ENCODE measurements at regions of chr20 and their contacts with region 1.

Region 1: DNA sequence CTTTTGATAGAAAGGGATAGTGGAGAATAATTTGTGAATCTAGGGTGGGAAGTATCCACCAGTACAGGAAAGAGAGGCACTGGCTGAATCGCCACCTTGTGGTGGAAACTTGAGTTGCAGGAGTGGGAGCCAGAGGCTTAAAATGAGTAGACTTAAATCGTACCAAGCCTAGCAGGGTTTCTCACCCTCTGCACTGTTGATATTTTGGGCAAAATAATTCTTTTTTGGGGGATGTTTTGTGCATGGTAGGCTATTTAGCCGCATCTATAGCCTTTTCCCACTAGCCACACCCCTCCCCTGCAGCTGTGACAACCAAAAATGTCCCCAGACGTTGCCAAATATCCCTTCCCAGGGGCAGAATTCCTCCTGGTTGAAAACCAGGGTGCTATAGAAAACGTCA is 119.1 kb downstream of the DHX35 start:
- DNase-seq: peak; percentile 62 to 94
- H3K4me3 ChIP-seq: no peak overlapping the region
- H3K27ac ChIP-seq: no peak overlapping the region
- H3K4me1 ChIP-seq: no peaks in the 10 kb centered on the region
- H3K27me3 ChIP-seq: no peaks in the 10 kb centered on the region; a peak in 1 of 7 replicates
- CTCF ChIP-seq: peak; percentile 75 to 92 (median 80)
- EP300 ChIP-seq: no peak
- POLR2A ChIP-seq: no peak
- RAD21 ChIP-seq: peak; percentile 63 to 69

Region 2: GRCh38 chr20:39021748-39022147 is 59.5 kb before region 1 on chr20:
- CTCF ChIA-PET with region 1: no interaction called
- POLR2A ChIA-PET with region 1: no interaction called
- DNase-seq: no peak
- H3K4me3 ChIP-seq: no peak overlapping the region
- H3K27ac ChIP-seq: no peak overlapping the region
- H3K4me1 ChIP-seq: no peaks in the 10 kb centered on the region
- H3K27me3 ChIP-seq: no peaks in the 10 kb centered on the region
- CTCF ChIP-seq: no peak
- EP300 ChIP-seq: no peak
- POLR2A ChIP-seq: no peak
- RAD21 ChIP-seq: no peak

Region 3: DNA sequence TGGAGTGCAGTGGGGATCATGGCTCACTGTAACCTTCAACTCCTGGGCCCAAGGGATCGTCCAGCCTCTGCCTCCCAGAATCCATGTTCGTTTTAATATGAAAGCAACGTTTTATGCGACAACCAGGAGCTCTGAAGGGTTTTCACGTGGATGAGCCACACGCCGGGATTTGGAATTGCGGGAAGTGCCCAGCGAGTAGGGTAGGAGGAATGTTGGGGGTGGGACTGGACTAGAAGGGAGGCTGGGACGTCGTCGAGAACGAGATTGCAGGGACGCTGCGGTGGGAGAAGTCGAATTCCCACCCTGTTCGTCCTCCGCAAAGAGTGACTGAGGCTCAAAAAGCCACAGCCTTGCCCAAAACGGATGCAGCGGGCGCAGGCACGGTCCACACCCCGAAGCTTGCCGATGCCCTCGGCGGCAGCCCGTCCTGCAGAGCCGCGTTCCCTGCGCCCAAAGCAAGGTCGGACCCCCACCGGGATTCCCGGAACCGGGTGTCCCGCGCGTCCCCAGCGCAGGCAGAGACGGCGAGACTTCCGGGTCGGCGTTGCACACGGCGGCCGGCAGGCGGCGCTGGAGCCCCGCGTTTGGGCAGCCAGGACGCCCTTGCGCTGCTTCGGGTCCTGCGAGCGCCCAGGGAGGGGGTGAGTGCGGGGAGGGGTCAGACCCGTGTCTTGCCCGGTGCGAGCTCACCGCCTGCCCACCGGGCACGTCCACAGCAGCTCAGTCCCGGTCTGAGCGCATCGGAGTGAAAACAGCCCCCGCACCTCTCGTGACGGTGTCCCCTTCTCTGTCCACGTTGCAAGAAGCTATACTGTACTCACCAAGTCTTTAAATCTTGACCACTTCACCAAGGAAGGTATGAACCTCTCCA is 31.3 kb before region 1 on chr20:
- CTCF ChIA-PET with region 1: interaction called, 127 read pairs
- POLR2A ChIA-PET with region 1: interaction called, 3 read pairs
- DNase-seq: peak; percentile 59 to 96
- H3K4me3 ChIP-seq: peak overlapping the region; percentile 47 to 76 (median 64)
- H3K27ac ChIP-seq: no peak overlapping the region
- H3K4me1 ChIP-seq: peaks cover 0 to 6% (median under 1%) of the 10 kb centered on the region in 4 experiments; a peak in 3 of 7 replicates
- H3K27me3 ChIP-seq: peaks cover 0 to 10% (median 6%) of the 10 kb centered on the region in 4 experiments; a peak in 4 of 7 replicates
- CTCF ChIP-seq: peak; percentile 89 to 98 (median 94)
- EP300 ChIP-seq: no peak
- POLR2A ChIP-seq: 0 out of 3 replicates have a peak, but pooled peaks of 1 of the 2 experiments have one; percentile 41
- RAD21 ChIP-seq: peak; percentile 94 to 98

Region 4: GRCh38 chr20:39057911-39058310 is 23.3 kb before region 1 on chr20:
- CTCF ChIA-PET with region 1: interaction called, 197 read pairs
- POLR2A ChIA-PET with region 1: no interaction called
- DNase-seq: no peak
- H3K4me3 ChIP-seq: no peak overlapping the region
- H3K27ac ChIP-seq: no peak overlapping the region
- H3K4me1 ChIP-seq: no peaks in the 10 kb centered on the region
- H3K27me3 ChIP-seq: no peaks in the 10 kb centered on the region
- CTCF ChIP-seq: no peak
- EP300 ChIP-seq: no peak
- POLR2A ChIP-seq: no peak
- RAD21 ChIP-seq: no peak

Region 5: GRCh38 chr20:39070484-39071231 is 10.6 kb before region 1 on chr20:
- CTCF ChIA-PET with region 1: interaction called, 197 read pairs
- POLR2A ChIA-PET with region 1: no interaction called
- DNase-seq: no peak
- H3K4me3 ChIP-seq: no peak overlapping the region
- H3K27ac ChIP-seq: no peak overlapping the region
- H3K4me1 ChIP-seq: peaks cover 0 to 3% (median 0%) of the 10 kb centered on the region in 4 experiments; a peak in 2 of 7 replicates
- H3K27me3 ChIP-seq: 0 out of 7 replicates have a peak, but pooled peaks cover 0 to 2% (median 0%) of the 10 kb centered on the region in 4 experiments
- CTCF ChIP-seq: no peak
- EP300 ChIP-seq: no peak
- POLR2A ChIP-seq: no peak
- RAD21 ChIP-seq: no peak

Region 6: GRCh38 chr20:39094391-39094790 is 13.1 kb after region 1 on chr20:
- CTCF ChIA-PET with region 1: interaction called, 18 read pairs
- POLR2A ChIA-PET with region 1: interaction called, 3 read pairs
- DNase-seq: no peak
- H3K4me3 ChIP-seq: no peak overlapping the region
- H3K27ac ChIP-seq: no peak overlapping the region
- H3K4me1 ChIP-seq: 0 out of 7 replicates have a peak, but pooled peaks cover 0 to 2% (median 0%) of the 10 kb centered on the region in 4 experiments
- H3K27me3 ChIP-seq: no peaks in the 10 kb centered on the region
- CTCF ChIP-seq: no peak
- EP300 ChIP-seq: no peak
- POLR2A ChIP-seq: no peak
- RAD21 ChIP-seq: no peak

Region 7: DNA sequence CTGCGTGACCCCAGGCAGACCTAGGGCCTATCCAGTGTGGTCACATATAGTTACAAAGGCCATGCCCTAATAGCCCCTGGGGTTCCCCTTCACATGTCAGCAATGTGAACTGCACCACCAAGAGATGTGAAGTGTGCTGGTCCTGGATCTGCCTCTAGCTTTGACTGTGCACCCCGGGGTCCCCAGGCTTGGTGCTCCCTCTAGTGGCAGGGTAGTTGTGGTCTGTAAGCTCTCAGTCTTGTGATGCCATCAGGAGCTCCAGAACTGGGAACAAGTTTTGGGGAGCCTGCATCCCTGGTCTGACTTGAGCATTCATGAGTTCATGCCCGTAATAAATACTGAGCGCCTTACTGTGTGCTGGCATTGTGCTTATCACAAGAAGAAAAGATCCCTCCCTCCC is 24.3 kb after region 1 on chr20:
- CTCF ChIA-PET with region 1: interaction called, 14 read pairs
- POLR2A ChIA-PET with region 1: no interaction called
- DNase-seq: no peak
- H3K4me3 ChIP-seq: no peak overlapping the region
- H3K27ac ChIP-seq: no peak overlapping the region
- H3K4me1 ChIP-seq: peaks cover 0 to 9% (median 4%) of the 10 kb centered on the region in 4 experiments; a peak in 4 of 7 replicates
- H3K27me3 ChIP-seq: no peaks in the 10 kb centered on the region
- CTCF ChIP-seq: peak in 2 of 3 experiments; percentile 26 to 37; a peak in 2 of 4 replicates
- EP300 ChIP-seq: no peak
- POLR2A ChIP-seq: no peak
- RAD21 ChIP-seq: no peak

Region 8: GRCh38 chr20:39214828-39215227 is 133.6 kb after region 1 on chr20:
- CTCF ChIA-PET with region 1: no interaction called
- POLR2A ChIA-PET with region 1: no interaction called
- DNase-seq: no peak
- H3K4me3 ChIP-seq: no peak overlapping the region
- H3K27ac ChIP-seq: no peak overlapping the region
- H3K4me1 ChIP-seq: peaks cover 0 to 5% (median 1%) of the 10 kb centered on the region in 4 experiments; a peak in 2 of 7 replicates
- H3K27me3 ChIP-seq: peaks cover 7 to 9% (median 8%) of the 10 kb centered on the region in 4 experiments; a peak in 5 of 7 replicates
- CTCF ChIP-seq: peak; percentile 35 to 54 (median 37)
- EP300 ChIP-seq: no peak
- POLR2A ChIP-seq: no peak
- RAD21 ChIP-seq: peak; percentile 64 to 67

Measured in H1 (cell line).